PC-9 (cell line): ENCODE measurements at regions of chr14 and their contacts with region 1.

Region 1: DNA sequence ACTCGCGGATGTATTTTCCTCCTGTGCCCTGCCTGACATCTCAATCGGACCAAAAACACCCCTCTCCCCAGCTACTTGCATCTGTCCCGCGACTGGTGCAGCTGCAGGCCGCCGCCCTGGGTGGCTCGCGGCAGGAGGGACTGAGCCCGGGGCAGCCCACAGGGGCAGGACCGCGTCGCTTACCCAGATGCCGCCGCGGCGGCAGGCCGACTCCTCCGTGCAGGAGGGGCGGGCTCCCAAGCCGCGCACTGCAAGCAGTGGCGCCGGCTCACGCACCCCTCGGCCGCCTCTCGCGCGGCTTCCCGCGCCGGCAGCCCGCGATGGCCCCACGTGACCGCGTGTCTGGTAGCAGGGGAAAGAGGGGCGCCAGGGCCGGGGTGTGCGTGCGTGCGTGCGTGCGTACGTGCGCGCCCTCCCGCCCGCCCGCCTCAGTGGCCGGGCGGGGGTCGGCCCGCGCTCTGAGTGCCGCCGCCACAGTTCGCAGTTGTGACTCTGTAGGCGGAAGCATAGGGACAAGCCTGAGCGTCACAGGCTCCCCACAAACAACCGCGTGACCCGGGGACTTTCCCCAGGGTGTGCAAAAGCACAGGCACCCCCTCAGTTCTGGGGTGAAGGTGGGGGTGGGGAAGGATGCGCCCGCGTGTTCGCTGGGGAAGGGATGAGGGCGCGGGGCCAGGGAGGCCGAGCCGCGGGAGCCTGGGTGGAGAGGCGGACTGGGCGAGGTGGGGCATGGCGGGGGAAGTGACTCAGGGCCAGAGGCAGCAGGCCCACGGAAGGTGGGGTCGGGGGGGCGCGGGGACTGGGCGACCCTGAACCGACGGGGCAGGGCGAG is at the start of gene ZBTB25:
- DNase-seq: peak; percentile 85 to 94
- H3K4me3 ChIP-seq: peak within 1 kb of the TSS; percentile 61
- H3K27ac ChIP-seq: peak within 1 kb of the TSS; percentile 93
- H3K4me1 ChIP-seq: peaks cover 55% of the 10 kb centered on the region
- H3K27me3 ChIP-seq: no peaks in the 10 kb centered on the region
- CTCF ChIP-seq: no peak
- total RNA-seq, gene ZBTB25: 18.6 and 22.9 TPM in 2 replicates

Region 2: DNA sequence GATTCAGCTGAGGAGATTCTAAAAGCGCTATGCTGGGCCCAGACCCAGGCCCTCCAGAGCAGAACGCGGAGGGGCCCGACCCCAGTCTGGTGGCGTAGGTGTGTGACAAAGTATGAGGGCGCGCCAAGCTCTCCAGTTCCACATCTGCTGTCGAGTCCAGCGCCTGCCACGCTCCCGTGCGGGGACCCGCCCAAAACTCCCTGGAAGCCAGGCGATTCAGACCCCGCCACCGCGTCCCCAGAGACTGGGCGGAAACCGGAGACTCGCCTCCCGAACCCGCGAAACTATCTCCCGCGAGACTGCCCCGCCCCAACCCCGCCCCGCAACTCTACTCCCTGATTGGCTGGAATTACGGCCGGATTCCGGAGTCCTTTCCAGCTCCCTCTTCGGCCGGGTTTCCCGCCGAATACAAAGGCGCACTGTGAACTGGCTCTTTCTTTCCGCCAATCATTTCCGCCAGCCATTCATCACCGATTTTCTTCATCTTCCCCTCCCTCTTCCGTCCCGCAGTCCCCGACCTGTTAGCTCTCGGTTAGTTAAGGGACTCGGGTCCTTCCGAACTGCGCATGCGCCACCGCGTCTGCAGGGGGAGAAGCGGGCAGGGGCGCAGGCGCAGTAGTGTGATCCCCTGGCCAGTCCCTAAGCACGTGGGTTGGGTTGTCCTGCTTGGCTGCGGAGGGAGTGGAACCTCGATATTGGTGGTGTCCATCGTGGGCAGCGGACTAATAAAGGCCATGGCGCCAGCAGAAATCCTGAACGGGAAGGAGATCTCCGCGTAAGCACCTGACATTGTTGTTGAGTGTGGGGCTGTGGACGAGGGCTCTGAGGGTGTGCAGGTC is 115.8 kb before region 1 on chr14 and contains the start of gene MTHFD1:
- CTCF ChIA-PET with region 1: no interaction called
- POLR2A ChIA-PET with region 1: no interaction called
- intact Hi-C with region 1: loop called (anchors 1 kb)
- DNase-seq: peak; percentile 98 to 99
- H3K4me3 ChIP-seq: peak within 1 kb of the TSS; percentile 73
- H3K27ac ChIP-seq: peak within 1 kb of the TSS; percentile 72
- H3K4me1 ChIP-seq: peaks cover 23% of the 10 kb centered on the region
- H3K27me3 ChIP-seq: no peaks in the 10 kb centered on the region
- CTCF ChIP-seq: no peak
- total RNA-seq, gene MTHFD1: 130 and 161 TPM in 2 replicates

Region 3: DNA sequence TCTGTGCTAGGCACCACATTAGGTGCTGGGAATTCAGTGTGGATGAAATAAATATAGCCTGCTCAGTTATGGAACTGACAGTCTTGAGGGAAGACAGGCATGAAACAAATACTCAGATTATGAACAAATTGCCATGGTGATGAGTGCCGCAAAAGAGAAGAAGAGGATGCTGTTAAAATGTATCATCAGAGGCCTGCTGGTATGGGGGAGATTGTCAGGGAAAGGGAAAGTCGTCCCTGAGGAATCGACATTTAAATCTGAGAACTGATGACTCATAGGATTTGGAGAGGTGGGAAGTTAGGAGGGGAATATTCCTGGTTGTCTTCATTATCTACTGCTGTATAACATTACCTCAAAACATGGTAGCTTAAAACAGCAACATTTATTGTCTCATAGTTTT is 88.1 kb after region 1 on chr14:
- CTCF ChIA-PET with region 1: no interaction called
- POLR2A ChIA-PET with region 1: no interaction called
- intact Hi-C with region 1: no loop called
- DNase-seq: no peak
- H3K4me3 ChIP-seq: no peak overlapping the region
- H3K27ac ChIP-seq: no peak overlapping the region
- H3K4me1 ChIP-seq: no peaks in the 10 kb centered on the region
- H3K27me3 ChIP-seq: no peaks in the 10 kb centered on the region
- CTCF ChIP-seq: no peak

Region 4: DNA sequence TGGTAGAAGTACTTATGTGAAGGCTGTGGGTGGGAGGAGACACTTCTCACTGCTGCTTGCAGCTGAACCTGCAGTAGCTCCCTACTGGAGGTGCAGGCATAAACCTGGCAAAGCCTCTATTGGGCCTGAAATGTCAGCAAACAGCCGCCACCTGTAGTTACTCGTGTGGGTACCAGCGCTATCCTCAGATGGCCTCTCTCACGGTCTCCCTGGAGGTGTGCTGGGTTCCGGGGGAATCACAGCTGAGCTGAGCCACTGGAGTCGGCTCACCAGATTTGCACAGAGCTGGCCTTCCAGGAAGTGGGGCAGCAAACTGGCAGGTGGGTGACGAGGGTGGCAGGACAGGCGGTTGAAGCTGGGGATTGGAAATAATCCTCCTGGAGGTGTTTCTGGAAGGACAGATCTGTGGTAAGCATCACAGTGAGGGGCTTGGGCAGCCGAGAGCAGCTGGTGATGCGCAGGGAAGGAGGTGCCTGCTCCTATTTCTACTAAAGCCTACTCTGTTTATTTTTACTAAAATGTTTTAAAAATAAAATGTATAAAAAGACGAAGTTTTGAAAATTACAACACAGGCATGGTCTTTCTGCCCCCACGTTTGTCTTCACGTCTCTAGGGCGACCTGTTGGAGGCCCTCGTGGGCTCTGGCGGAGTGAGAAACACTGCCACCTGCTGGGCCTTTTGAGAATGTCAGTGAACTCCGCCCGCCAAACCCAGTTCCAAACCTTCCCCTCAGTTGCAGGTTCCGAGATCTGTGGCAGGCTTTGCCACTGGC is 132.7 kb after region 1 on chr14:
- CTCF ChIA-PET with region 1: interaction called, 14 read pairs
- POLR2A ChIA-PET with region 1: no interaction called
- intact Hi-C with region 1: loop called (anchors 1 kb)
- DNase-seq: peak in 1 of 2 experiments; percentile 68
- H3K4me3 ChIP-seq: no peak overlapping the region
- H3K27ac ChIP-seq: no peak overlapping the region
- H3K4me1 ChIP-seq: peaks cover 34% of the 10 kb centered on the region
- H3K27me3 ChIP-seq: no peaks in the 10 kb centered on the region
- CTCF ChIP-seq: peak; percentile 98

Region 5: DNA sequence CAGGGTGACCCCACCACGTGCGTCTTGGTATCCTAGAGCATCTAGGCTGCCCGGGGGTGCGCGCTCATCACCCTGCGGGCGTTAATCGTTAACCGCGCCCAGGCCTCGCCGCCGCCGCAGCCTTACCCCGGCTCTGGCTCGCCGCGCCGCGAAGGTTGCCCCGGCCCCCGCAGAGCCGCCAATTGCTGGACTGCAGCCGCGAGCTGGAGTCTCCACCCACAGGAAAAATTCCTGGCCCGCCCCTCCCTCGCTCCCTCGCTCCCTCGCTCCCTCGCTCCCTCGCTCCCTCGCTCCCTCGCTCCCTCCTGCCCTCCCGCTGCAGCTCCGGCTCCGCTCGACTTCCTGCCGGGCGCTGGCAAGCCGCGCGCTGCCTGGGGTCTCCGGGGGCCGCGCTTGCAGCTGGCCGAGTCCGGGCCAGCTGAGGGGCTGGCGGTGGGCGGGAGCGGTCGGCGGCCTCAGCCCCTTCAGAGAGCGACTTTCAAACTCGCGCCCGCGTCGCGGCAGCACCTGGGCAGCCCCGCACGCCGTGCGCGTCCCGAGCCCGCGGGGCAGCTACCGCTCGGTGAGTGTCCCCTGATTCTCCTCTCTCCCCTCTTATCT is 200.5 kb after region 1 on chr14 and contains the start of gene PLEKHG3:
- CTCF ChIA-PET with region 1: no interaction called
- POLR2A ChIA-PET with region 1: no interaction called
- intact Hi-C with region 1: loop called (anchors 10 kb)
- DNase-seq: peak; percentile 70 to 88
- H3K4me3 ChIP-seq: peak within 1 kb of the TSS; percentile 97
- H3K27ac ChIP-seq: peak within 1 kb of the TSS; percentile 49
- H3K4me1 ChIP-seq: peaks cover 69% of the 10 kb centered on the region
- H3K27me3 ChIP-seq: no peaks in the 10 kb centered on the region
- CTCF ChIP-seq: no peak
- total RNA-seq, gene PLEKHG3: 59.3 and 61.7 TPM in 2 replicates

Region 6: DNA sequence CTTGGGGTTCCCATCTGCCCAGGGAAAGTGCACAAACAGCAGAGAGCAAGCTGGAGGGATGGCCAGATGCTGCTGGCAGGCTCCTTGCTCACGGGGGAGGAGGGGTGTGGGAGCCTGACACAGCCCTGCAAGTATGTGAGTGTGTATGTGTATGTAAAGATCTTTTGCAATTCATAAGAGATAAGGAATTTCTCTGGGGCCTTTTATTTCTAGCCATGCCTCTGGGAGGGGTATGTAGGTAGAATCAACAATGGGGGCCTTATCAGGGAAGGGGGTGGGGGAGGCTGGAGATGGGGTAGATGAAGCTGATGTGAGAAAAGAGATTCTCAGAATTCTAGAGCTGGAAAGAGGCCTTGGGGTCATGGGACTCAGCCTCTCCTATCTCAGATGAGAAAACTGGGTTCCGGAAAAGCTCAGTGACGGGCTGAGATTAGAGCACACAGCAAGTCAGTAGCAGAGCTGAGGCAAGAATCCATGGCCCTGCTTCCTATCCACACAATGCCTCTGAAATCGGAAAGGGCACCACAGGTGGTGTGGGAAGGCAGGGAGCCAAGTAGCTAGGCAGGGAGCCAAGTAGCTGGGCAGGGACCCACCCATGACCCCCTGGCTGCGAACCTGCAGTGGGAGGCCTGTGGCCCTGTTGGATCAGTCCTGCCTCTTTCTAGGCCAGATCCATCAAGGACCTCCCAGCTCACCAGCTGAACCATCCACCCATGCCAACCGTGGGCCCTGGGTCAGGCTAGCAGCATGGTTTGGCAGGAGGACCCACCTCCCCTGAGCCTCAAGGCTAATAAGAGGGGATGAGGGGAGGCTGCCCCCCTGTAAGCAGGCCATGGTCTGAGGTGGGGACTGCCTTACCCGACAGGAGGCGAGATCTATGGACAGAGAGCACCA is 255.2 kb after region 1 on chr14:
- CTCF ChIA-PET with region 1: no interaction called
- POLR2A ChIA-PET with region 1: no interaction called
- intact Hi-C with region 1: loop called (anchors 2 kb)
- DNase-seq: peak; percentile 77 to 85
- H3K4me3 ChIP-seq: no peak overlapping the region
- H3K27ac ChIP-seq: peak overlapping the region; percentile 34
- H3K4me1 ChIP-seq: peaks cover 79% of the 10 kb centered on the region
- H3K27me3 ChIP-seq: no peaks in the 10 kb centered on the region
- CTCF ChIP-seq: no peak

Region 7: GRCh38 chr14:64914237-64914971 is 410.7 kb after region 1 on chr14 and contains the start of gene CHURC1:
- CTCF ChIA-PET with region 1: no interaction called
- POLR2A ChIA-PET with region 1: no interaction called
- intact Hi-C with region 1: loop called (anchors 10 kb)
- DNase-seq: peak; percentile 98 to 100
- H3K4me3 ChIP-seq: peak within 1 kb of the TSS; percentile 70
- H3K27ac ChIP-seq: peak within 1 kb of the TSS; percentile 62
- H3K4me1 ChIP-seq: peaks cover 20% of the 10 kb centered on the region
- H3K27me3 ChIP-seq: no peaks in the 10 kb centered on the region
- CTCF ChIP-seq: no peak
- total RNA-seq, gene CHURC1: 88.1 and 91.8 TPM in 2 replicates

Region 8: GRCh38 chr14:64971943-64972791 is 468.5 kb after region 1 on chr14 and contains the start of gene RAB15:
- CTCF ChIA-PET with region 1: no interaction called
- POLR2A ChIA-PET with region 1: no interaction called
- intact Hi-C with region 1: loop called (anchors 5 kb)
- DNase-seq: peak in 1 of 2 experiments; percentile 42
- H3K4me3 ChIP-seq: peak within 1 kb of the TSS; percentile 83
- H3K27ac ChIP-seq: peak within 1 kb of the TSS; percentile 79
- H3K4me1 ChIP-seq: peaks cover 45% of the 10 kb centered on the region
- H3K27me3 ChIP-seq: no peaks in the 10 kb centered on the region
- CTCF ChIP-seq: no peak
- total RNA-seq, gene RAB15: 52.9 and 74.9 TPM in 2 replicates